Astrocyte of the cerebellum (primary cell): ENCODE measurements at regions of chr9 and their contacts with region 1.

Region 1: DNA sequence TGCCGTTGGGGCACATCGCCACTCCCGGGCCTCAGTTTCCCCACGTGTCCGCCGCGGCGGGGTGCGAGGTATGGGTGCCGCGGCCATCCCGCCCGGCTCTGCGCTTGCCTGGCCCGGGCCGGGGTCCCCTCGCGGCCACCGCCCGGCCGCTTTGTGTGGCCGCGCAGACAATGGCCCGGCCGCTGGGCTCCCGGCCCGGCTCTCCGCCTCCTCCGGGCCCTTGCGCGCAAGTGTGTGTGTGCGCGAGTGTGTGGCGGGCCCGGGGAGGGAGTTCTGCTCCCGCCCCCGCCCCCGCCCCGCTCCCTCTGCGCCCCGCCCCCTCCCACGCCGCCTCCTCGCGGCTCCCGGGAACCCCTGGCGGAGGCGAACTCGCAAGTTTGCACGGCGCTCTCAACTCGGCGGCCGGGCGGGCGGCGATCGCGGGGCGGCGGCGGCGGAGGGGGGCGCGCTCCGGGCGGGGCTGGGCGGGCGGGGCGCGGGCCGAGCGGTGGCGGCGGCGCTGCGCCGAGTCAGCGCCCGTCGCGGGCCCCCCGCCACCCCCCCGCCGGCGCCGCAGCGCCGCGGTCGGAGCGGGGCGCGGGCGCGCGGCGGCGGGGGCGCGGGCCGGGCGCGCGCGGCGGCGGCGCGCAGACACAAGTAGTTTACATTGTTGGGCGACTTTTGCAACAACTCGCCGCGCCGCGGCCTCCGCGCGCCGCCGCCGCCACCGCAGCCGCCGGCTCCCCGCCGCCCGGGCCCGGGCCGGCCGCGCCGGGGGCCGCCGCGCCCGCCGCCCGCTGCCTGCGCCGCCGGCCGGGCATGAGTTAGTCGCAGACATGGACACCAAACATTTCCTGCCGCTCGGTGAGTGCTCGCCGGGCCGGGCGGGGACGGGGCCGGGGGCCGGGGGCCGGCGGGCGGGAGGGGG is at the start of gene RXRA:
- DNase-seq: peak; percentile 44
- H3K4me3 ChIP-seq: peak within 1 kb of the TSS; percentile 71
- CTCF ChIP-seq: no peak

Region 2: GRCh38 chr9:134089972-134090371 is 236.1 kb before region 1 on chr9:
- in situ Hi-C with region 1: no loop called
- DNase-seq: no peak
- H3K4me3 ChIP-seq: no peak overlapping the region
- CTCF ChIP-seq: no peak

Region 3: GRCh38 chr9:134424818-134425217 is 98.7 kb after region 1 on chr9:
- in situ Hi-C with region 1: loop called (anchors 5 kb)
- DNase-seq: no peak
- H3K4me3 ChIP-seq: no peak overlapping the region
- CTCF ChIP-seq: no peak